ENCODE measurements at regions of chr3 and their contacts with region 1.

Region 1: DNA sequence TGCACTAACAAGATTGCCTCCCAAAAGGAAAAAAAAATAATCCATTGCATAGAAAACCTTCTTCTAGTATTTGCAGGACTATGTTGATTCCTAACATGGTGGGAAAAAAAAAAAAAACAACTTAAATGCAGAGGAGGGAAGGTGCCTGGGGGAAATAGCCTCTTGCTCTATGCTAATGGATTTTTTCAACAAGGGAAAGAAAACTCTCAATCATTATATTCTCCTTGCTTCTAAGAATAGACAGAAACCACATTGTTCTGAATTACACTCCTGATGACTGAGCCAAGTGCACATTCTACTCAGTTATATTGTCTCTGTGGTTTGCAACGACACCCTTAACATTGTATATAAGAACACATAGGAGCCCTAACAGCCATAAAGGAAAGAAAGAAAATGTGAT is 760.2 kb downstream of the NAALADL2 start:
- DNase-seq: no peak
- H3K4me3 ChIP-seq: no peak overlapping the region
- H3K27ac ChIP-seq: no peak overlapping the region
- H3K4me1 ChIP-seq: no peaks in the 10 kb centered on the region
- H3K27me3 ChIP-seq: no peaks in the 10 kb centered on the region
- CTCF ChIP-seq: no peak

Region 2: GRCh38 chr3:174681784-174682183 is 937.6 kb before region 1 on chr3:
- CTCF ChIA-PET with region 1: no interaction called
- POLR2A ChIA-PET with region 1: no interaction called
- intact Hi-C with region 1: no loop called
- DNase-seq: no peak
- H3K4me3 ChIP-seq: no peak overlapping the region
- H3K27ac ChIP-seq: no peak overlapping the region
- H3K4me1 ChIP-seq: no peaks in the 10 kb centered on the region
- H3K27me3 ChIP-seq: no peaks in the 10 kb centered on the region
- CTCF ChIP-seq: no peak

Region 3: DNA sequence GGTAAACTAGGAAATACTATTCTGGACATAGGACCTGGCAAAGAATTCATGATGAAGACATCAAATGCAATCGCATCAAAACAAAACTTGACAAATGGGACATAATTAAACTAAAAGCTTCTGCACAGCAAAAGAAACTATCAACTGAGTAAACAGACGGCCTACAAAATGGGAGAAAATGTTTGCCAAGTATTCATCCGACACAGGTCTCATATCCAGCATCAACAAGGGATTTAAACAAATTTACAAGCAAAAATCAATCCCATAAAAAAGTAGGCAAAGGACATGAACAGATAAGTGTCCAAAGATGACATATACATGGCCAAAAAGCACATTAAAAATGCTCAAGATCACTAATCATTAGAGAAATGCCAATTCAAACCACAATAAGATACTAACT is 328.7 kb after region 1 on chr3:
- CTCF ChIA-PET with region 1: interaction called, 10 read pairs
- POLR2A ChIA-PET with region 1: no interaction called
- intact Hi-C with region 1: no loop called
- DNase-seq: no peak
- H3K4me3 ChIP-seq: no peak overlapping the region
- H3K27ac ChIP-seq: no peak overlapping the region
- H3K4me1 ChIP-seq: no peaks in the 10 kb centered on the region
- H3K27me3 ChIP-seq: no peaks in the 10 kb centered on the region
- CTCF ChIP-seq: no peak

Measured in A673 (cell line).